Sciatic nerve (tissue), 2 donors: ENCODE measurements at regions of chr10 and their contacts with region 1.

Region 1: GRCh38 chr10:125707541-125708468 is 11.7 kb upstream of the EDRF1 start:
- DNase-seq: no peak
- ATAC-seq: no peak

Region 2: GRCh38 chr10:124961248-124961570 is 746.6 kb before region 1 on chr10:
- intact Hi-C with region 1: loop called (anchors 10 kb)
- DNase-seq: no peak
- ATAC-seq: no peak